Calu3 (cell line): ENCODE measurements at regions of chr7 and their contacts with region 1.

Region 1: GRCh38 chr7:32018845-32019578 is 51.2 kb downstream of the PDE1C start:
- DNase-seq: no peak
- H3K4me3 Mint-ChIP-seq: no peak overlapping the region
- H3K27ac Mint-ChIP-seq: no peak overlapping the region
- H3K4me1 Mint-ChIP-seq: peaks cover 19% of the 10 kb centered on the region
- H3K27me3 Mint-ChIP-seq: no peaks in the 10 kb centered on the region
- CTCF ChIP-seq: no peak

Region 2: DNA sequence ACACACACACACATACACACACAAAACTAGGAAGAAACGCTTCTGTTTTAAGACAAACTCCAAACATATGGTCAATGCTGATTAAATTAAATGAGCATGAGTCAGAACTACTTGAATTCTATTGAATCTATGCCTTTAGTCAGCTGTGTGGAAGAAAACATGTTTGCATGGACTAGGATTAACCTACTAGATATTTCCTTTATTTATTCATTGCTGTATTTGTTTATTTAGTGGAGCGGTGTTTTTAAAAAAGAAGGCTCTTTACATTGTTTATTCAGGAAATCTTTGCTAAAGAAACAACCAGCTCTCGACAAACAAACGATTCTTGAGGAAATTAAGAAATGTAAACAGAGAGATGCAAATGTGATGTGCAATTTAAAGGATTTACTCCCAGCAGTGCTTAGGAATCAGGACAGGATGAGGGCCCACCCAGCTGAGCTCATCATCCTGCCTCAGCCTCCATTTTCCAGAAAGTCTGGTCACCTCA is 32.0 kb before region 1 on chr7:
- CTCF ChIA-PET with region 1: interaction called, 10 read pairs
- intact Hi-C with region 1: no loop called
- DNase-seq: no peak
- H3K4me3 Mint-ChIP-seq: no peak overlapping the region
- H3K27ac Mint-ChIP-seq: no peak overlapping the region
- H3K4me1 Mint-ChIP-seq: peaks cover 33% of the 10 kb centered on the region
- H3K27me3 Mint-ChIP-seq: no peaks in the 10 kb centered on the region
- CTCF ChIP-seq: no peak